ENCODE measurements at regions of chr12 and their contacts with region 1.

Region 1: GRCh38 chr12:109844983-109845823 is 12.0 kb upstream of the TRPV4 start:
- DNase-seq: peak; percentile 69 to 99
- H3K4me3 ChIP-seq: peak overlapping the region in 1 of 4 experiments; percentile 43; a peak in 2 of 8 replicates
- H3K27ac ChIP-seq: no peak overlapping the region
- H3K4me1 ChIP-seq: peaks cover 0 to 4% (median 2%) of the 10 kb centered on the region in 4 experiments; a peak in 5 of 7 replicates
- H3K27me3 ChIP-seq: no peaks in the 10 kb centered on the region
- CTCF ChIP-seq: peak; percentile 95 to 96 (median 95)
- EP300 ChIP-seq: no peak; a peak in 1 of 3 replicates
- POLR2A ChIP-seq: no peak
- RAD21 ChIP-seq: peak; percentile 74 to 83

Region 2: GRCh38 chr12:109752117-109753053 is 92.8 kb before region 1 on chr12:
- CTCF ChIA-PET with region 1: no interaction called
- POLR2A ChIA-PET with region 1: no interaction called
- DNase-seq: no peak
- H3K4me3 ChIP-seq: no peak overlapping the region
- H3K27ac ChIP-seq: no peak overlapping the region
- H3K4me1 ChIP-seq: no peaks in the 10 kb centered on the region; a peak in 1 of 7 replicates
- H3K27me3 ChIP-seq: no peaks in the 10 kb centered on the region
- CTCF ChIP-seq: no peak
- EP300 ChIP-seq: no peak
- POLR2A ChIP-seq: no peak
- RAD21 ChIP-seq: no peak

Region 3: GRCh38 chr12:109797905-109798669 is 47.1 kb before region 1 on chr12:
- CTCF ChIA-PET with region 1: interaction called, 183 read pairs
- POLR2A ChIA-PET with region 1: no interaction called
- DNase-seq: peak in 1 of 2 experiments; percentile 67
- H3K4me3 ChIP-seq: no peak overlapping the region
- H3K27ac ChIP-seq: no peak overlapping the region
- H3K4me1 ChIP-seq: no peaks in the 10 kb centered on the region; a peak in 1 of 7 replicates
- H3K27me3 ChIP-seq: no peaks in the 10 kb centered on the region
- CTCF ChIP-seq: peak; percentile 38 to 60 (median 50)
- EP300 ChIP-seq: no peak
- POLR2A ChIP-seq: no peak
- RAD21 ChIP-seq: peak; percentile 18 to 45; a peak in 3 of 4 replicates

Region 4: GRCh38 chr12:109811624-109811995 is 33.6 kb before region 1 on chr12:
- CTCF ChIA-PET with region 1: interaction called, 183 read pairs
- POLR2A ChIA-PET with region 1: interaction called, 3 read pairs
- DNase-seq: no peak
- H3K4me3 ChIP-seq: no peak overlapping the region
- H3K27ac ChIP-seq: no peak overlapping the region
- H3K4me1 ChIP-seq: no peaks in the 10 kb centered on the region; a peak in 1 of 7 replicates
- H3K27me3 ChIP-seq: no peaks in the 10 kb centered on the region
- CTCF ChIP-seq: peak; percentile 19 to 39 (median 24); a peak in 3 of 4 replicates
- EP300 ChIP-seq: no peak
- POLR2A ChIP-seq: no peak
- RAD21 ChIP-seq: no peak; a peak in 1 of 4 replicates

Region 5: DNA sequence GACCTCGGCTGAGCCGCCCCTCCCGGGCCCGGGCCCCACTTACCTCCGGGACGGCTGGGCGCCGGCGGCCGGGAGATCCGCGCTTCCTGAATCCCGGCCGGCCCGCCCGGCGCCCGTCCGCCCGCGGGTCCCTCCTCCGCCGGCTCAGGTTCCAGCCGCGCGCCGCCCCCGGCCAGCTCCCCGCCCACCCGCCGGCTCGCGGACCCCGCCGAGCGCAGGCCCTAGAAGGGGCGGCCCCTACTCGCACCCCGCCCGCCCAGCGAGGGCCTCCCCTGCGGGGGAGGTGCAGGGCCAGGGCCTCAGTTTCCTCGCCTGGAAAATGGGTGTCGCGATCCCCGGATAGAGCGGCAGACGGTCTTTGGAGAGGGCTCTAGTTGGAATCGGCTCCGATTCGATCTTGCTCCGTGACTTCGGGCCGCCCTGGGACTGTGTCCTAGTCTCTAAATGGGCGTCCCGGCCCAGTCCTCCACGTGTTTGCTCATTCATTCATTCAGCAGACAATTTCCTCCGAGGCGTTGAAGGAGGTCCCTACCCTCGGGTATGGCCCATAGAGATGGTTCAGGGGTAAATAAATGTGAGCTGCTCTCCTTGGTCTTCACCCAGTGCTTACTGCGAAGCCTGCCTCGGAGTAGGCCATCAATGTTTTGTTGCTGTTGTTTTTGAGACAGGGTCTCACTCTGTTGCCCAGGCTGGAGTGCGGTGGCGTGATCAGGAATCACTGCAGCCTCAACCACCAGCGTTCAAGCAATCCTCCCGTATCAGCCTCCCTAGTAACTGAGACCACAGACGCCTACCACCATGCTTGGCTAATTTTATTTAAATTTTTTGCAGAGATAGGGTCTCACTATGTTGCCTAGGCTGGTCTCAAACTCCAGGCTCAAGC is 11.7 kb before region 1 on chr12 and contains the start of gene TRPV4:
- CTCF ChIA-PET with region 1: interaction called, 92 read pairs
- POLR2A ChIA-PET with region 1: interaction called, 9 read pairs
- DNase-seq: peak in 1 of 2 experiments; percentile 77
- H3K4me3 ChIP-seq: peak within 1 kb of the TSS; percentile 38 to 61 (median 43)
- H3K27ac ChIP-seq: no peak within 1 kb of the TSS
- H3K4me1 ChIP-seq: peaks cover 0 to 6% (median 1%) of the 10 kb centered on the region in 4 experiments; a peak in 3 of 7 replicates
- H3K27me3 ChIP-seq: no peaks in the 10 kb centered on the region; a peak in 1 of 7 replicates
- CTCF ChIP-seq: no peak
- EP300 ChIP-seq: no peak
- POLR2A ChIP-seq: no peak
- RAD21 ChIP-seq: no peak
- total RNA-seq, gene TRPV4: 2.1 and 2.5 TPM in 2 replicates

Measured in H1 (cell line).